Left colon (tissue), 2 donors: ENCODE measurements at regions of chr14 and their contacts with region 1.

Region 1: GRCh38 chr14:93146119-93146518 is 30.4 kb upstream of the ITPK1 start:
- DNase-seq: no peak
- ATAC-seq: no peak

Region 2: GRCh38 chr14:92800012-92800411 is 346.1 kb before region 1 on chr14:
- intact Hi-C with region 1: loop called in 1 of 2 experiments (anchors 5 kb)
- DNase-seq: no peak
- ATAC-seq: no peak

Region 3: GRCh38 chr14:92945959-92946846 is 199.9 kb before region 1 on chr14:
- intact Hi-C with region 1: loop called in 1 of 2 experiments (anchors 10 kb)
- DNase-seq: peak; percentile 92 to 93
- ATAC-seq: peak; percentile 93